Right ventricle myocardium superior (tissue), 1 donor: ENCODE measurements at regions of chr17 and their contacts with region 1.

Region 1: DNA sequence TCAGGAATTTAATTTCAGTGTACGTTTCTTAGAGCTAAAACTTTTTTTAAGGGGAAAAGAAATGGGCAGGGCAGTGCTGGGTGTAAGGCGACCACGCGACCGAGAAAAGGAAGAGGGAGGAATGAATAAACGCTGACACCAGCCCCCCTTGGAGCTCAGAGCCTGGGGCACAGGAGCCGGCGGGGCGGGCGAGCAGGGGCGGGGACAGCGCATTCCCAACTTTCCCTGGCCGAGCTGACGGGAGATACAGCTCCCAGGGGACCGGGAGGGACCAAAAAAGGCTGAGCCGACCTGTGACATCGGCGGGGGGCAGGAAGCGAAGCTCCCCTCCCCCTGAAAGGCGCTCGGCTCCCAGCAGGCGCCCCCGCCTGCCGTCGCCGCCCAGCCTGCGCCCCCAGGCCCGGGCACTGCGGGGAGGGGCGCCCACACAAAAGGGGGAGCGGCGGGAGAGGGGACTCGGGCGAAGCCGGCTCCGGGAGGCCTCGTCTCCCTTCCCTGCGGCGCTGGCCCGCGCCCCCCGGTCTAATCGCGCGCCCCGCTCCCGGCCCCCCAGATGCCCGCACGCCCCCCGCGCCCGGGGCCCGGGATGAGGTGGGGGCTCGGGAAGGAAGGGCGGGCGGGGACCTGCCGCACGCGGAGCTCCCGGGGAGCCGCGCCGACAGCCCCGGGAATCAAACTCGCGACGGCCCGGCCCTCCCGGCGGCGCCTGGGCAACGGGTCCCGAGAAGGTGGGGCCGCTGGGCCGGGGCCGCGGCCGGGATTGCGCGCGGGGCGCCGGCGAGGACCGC is 623 bp downstream of the CUEDC1 start:
- DNase-seq: peak; percentile 91
- ATAC-seq: peak; percentile 81

Region 2: GRCh38 chr17:57788725-57789124 is 165.9 kb before region 1 on chr17:
- intact Hi-C with region 1: no loop called
- DNase-seq: no peak
- ATAC-seq: no peak

Region 3: DNA sequence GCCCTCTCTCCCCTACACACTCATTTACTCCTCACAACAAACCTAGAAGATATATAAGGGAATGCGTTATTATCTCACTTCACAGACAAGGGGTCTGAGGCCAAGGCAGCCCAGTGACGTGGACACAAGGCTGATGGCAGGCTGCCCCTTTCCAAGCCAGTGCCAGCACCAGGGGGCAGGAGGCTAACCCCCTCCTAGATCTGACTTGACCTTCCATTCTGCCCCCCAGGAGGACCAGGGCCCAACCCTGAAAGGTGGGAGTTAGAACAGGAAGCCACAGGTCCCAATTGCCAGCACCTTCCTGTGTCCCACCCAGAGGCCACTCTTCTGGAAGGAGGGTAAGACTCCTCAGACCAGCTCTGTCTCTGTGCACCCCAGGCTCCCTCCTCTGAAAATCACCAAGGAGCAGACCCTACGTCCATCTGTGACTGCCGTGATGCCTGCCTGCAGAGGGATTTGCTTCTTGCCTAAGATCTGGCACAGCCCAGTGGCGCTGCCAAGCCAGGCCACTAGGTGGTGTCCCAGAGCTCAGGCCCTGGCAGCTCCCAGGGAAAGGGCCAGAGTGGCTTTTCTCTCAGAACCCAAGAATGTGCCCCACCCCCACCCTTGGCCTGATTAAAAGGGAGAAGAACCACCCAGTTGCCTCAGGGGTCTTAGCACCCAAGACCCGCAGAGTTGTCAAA is 62.3 kb before region 1 on chr17:
- intact Hi-C with region 1: no loop called
- DNase-seq: peak; percentile 94
- ATAC-seq: peak; percentile 52

Region 4: DNA sequence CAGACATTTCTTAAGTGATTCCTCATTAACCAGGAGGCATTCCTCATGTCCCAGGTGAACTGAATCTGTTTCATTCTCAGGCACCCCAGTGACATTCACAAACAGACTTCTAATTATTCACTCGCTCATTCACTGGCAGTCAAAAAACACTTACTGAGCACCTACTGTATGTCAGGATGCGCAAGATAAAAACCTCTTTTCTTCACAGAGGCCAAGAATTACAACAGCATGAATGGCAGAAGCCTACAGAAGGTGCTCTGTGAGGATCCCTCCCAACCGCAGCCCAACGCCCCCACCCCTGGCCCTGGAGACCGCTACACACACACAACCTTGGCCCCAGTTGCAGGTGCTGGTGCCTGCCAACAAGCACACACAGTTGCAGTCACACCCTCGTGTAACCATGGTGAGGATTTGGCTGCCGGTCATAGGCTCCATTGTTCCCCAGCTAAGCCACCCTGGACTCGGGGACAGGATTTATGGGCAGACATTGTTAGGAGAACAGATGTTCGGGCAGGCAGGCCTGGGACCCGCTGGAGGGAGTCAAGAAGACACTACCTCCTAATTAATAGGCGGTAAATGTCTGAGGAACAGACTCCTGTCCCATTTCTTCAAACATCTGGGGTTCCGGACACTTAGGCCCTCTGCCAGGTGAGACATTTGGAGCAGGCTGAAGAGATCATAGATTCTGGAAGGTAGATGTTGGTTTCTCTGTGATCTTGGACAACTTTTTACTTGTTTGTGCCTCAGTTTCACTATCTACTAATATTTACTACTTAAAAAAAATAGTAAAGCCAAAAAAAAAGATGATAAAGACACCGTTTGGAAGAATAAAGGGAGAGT is 42.5 kb before region 1 on chr17:
- intact Hi-C with region 1: loop called (anchors 5 kb)
- DNase-seq: peak; percentile 96
- ATAC-seq: peak; percentile 89

Region 5: DNA sequence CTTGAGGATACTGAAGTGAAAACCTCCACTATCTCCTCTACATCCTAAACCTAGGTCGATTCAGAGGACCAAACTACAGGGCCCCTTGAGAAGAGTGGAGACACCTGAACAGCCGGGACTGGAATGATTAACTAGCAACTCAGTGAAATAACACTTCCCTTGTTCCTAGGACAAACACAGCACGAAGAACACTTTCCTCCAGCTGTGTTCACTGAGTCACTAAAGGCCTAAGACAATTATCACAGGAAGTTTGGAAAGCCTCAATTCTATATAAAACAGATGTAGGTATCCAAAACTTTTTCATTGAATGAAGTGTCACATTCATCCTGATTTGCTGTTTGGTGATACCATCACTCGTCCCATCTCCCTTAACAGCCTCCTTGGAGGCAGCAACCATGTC is 16.1 kb after region 1 on chr17:
- intact Hi-C with region 1: loop called (anchors 2 kb)
- DNase-seq: no peak
- ATAC-seq: no peak

Region 6: GRCh38 chr17:57987580-57988421 is 33.2 kb after region 1 on chr17 and contains the start of gene VEZF1:
- intact Hi-C with region 1: loop called (anchors 5 kb)
- DNase-seq: peak; percentile 90
- ATAC-seq: peak; percentile 76
- total RNA-seq, gene VEZF1: 73.7 TPM